Posterior cingulate gyrus (tissue), 11 donors: ENCODE measurements at regions of chr6 and their contacts with region 1.

Region 1: GRCh38 chr6:43702534-43703440 is 15.2 kb upstream of the MRPS18A start:
- DNase-seq: peak in 1 of 10 donors; percentile 76

Region 2: GRCh38 chr6:43629505-43630300 is 73.1 kb before region 1 on chr6:
- intact Hi-C with region 1: no loop called
- DNase-seq: peak; percentile 67 to 98 (median 88)

Region 3: GRCh38 chr6:43758617-43759050 is 55.8 kb after region 1 on chr6:
- intact Hi-C with region 1: loop called (anchors 10 kb)
- DNase-seq: peak in 2 of 10 donors; percentile 47 to 83

Region 4: DNA sequence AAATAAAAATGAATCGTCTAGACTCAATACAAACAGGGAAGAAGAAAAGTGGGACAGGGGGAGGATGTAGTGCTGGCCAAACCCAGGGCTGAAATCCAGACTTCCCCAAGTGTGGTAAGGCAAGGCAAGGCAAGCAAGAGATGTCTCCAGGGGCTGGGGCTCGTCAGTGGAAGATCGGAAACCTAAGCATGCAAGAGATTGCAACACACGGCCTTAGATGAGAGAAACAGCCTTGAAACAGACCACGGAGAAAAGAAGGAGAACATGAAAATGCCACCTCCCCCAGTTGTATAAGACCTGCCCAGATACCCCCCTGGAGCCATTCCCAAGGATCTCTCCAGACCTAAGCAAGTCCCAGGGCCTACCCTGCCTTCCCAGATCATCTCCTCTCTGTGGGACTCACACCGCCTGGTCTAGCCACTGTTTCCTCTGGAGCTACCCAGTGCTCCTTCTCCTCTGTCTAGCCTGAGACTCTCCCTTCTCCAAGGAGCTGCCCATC is 87.3 kb after region 1 on chr6:
- intact Hi-C with region 1: no loop called
- DNase-seq: peak in 2 of 10 donors; percentile 49 to 55